ENCODE measurements at regions of chr6 and their contacts with region 1.

Region 1: GRCh38 chr6:8219352-8219943 is 117.1 kb upstream of the EEF1E1 start:
- DNase-seq: peak; percentile 20
- H3K4me3 ChIP-seq: no peak overlapping the region
- H3K27ac ChIP-seq: no peak overlapping the region
- H3K4me1 ChIP-seq: no peaks in the 10 kb centered on the region
- H3K27me3 ChIP-seq: no peaks in the 10 kb centered on the region
- CTCF ChIP-seq: peak; percentile 70 to 77

Region 2: DNA sequence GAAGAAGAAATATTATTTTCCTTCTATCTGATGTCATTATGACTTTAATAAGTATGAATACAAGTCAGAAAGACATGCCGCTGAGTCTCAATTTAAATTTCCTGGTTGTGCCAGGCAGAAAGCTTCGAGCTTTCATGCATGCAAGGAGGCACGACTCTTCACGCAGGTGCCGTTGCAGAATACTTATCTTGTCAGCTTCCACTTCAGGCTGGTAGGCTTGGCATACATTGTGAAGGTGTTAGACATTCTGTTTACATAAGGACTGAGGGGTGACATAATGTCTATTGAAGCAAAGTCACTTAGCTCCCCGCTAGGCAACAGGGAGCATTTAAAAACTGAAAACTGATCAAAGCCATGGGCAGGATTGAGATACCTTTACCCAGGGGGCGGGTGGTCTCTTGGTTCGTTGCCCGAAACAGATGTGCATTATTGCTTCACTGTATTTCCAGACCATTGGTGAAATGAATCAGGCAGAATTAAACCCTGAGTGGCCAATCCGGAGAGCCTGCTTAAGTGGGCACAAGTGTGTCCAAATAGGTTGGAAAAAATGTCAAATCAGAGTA is 477.1 kb before region 1 on chr6:
- CTCF ChIA-PET with region 1: no interaction called
- dilution Hi-C with region 1: no loop called
- in situ Hi-C with region 1: no loop called
- intact Hi-C with region 1: no loop called
- DNase-seq: no peak
- H3K4me3 ChIP-seq: no peak overlapping the region
- H3K27ac ChIP-seq: no peak overlapping the region
- H3K4me1 ChIP-seq: no peaks in the 10 kb centered on the region
- H3K27me3 ChIP-seq: no peaks in the 10 kb centered on the region
- CTCF ChIP-seq: no peak

Region 3: GRCh38 chr6:8131256-8131897 is 88.1 kb before region 1 on chr6:
- CTCF ChIA-PET with region 1: interaction called, 14 read pairs
- dilution Hi-C with region 1: no loop called
- in situ Hi-C with region 1: loop called (anchors 5 kb)
- intact Hi-C with region 1: loop called (anchors 1 kb)
- DNase-seq: peak; percentile 53
- H3K4me3 ChIP-seq: no peak overlapping the region
- H3K27ac ChIP-seq: no peak overlapping the region
- H3K4me1 ChIP-seq: no peaks in the 10 kb centered on the region
- H3K27me3 ChIP-seq: no peaks in the 10 kb centered on the region
- CTCF ChIP-seq: peak; percentile 44 to 72

Region 4: DNA sequence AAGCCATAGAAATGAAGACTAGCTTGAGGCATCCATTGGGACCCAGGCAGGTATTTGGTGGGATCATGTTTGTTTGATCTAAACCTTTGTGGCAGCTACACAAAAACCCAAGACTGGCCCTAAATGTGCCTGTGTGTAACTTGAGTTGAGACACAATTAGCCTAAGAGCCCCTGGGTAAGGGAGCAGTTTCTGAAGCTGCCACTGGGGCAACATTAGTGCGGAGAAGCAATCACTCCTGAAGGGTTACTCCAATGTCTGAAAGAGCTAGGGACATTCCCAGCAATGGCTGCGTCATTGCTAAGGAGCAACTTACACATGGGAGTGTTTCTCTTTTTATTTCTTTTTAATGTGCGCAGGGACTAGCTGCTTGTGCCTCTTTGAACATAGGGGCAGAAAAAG is 49.2 kb before region 1 on chr6:
- CTCF ChIA-PET with region 1: no interaction called
- dilution Hi-C with region 1: no loop called
- in situ Hi-C with region 1: no loop called
- intact Hi-C with region 1: loop called (anchors 5 kb)
- DNase-seq: no peak
- H3K4me3 ChIP-seq: no peak overlapping the region
- H3K27ac ChIP-seq: no peak overlapping the region
- H3K4me1 ChIP-seq: peaks cover 12% of the 10 kb centered on the region
- H3K27me3 ChIP-seq: peaks cover 8% of the 10 kb centered on the region
- CTCF ChIP-seq: no peak

Region 5: DNA sequence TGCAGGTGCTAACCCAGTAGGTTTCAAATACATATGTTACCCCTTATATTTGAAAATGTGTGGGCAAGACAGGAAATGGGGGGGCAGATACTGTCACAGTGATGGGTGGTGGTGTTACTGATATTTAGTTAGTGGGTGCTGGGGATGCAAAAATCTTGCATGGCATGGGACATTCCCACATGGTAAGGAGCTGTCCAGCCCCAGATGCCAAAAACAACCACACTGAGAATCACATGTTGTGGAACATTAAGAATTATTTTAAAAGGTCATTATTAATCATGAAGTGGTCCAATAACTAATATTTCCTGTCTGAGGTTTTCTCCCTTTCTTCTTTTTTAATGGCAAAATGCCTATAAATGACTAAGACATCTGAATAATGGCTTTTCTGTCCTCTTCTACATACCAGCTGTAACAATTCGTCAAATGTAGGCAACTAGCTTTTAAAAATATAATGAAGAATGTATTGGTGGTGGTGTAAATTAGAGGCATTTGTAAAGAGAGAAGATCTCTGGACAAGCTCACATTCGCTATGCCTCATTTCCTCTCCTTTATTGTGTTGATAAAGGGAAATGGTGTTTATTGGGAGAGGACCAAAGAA is 273.2 kb after region 1 on chr6:
- CTCF ChIA-PET with region 1: no interaction called
- dilution Hi-C with region 1: no loop called
- in situ Hi-C with region 1: no loop called
- intact Hi-C with region 1: no loop called
- DNase-seq: peak; percentile 22
- H3K4me3 ChIP-seq: no peak overlapping the region
- H3K27ac ChIP-seq: no peak overlapping the region
- H3K4me1 ChIP-seq: peaks cover 7% of the 10 kb centered on the region
- H3K27me3 ChIP-seq: no peaks in the 10 kb centered on the region
- CTCF ChIP-seq: no peak

Region 6: DNA sequence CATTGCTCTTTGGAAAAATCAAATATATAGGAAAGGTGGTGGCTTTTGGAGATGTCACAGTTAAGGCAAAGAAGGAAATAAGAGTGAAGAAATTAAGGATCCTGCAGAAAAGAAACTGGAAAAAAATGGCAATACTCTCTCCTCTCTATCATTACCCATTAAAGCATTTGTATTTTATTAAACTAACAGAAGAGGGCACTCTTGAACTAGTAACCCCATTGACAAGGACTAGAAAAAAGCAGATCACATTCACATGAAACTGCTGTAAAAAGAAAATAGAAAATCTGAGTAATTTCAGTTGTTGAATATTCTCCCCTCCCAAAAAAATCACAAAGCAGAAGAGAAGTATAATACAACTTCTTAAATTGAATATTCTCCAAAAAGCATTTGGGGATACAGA is 320.0 kb after region 1 on chr6:
- CTCF ChIA-PET with region 1: no interaction called
- dilution Hi-C with region 1: no loop called
- in situ Hi-C with region 1: no loop called
- intact Hi-C with region 1: no loop called
- DNase-seq: peak; percentile 33
- H3K4me3 ChIP-seq: no peak overlapping the region
- H3K27ac ChIP-seq: no peak overlapping the region
- H3K4me1 ChIP-seq: no peaks in the 10 kb centered on the region
- H3K27me3 ChIP-seq: no peaks in the 10 kb centered on the region
- CTCF ChIP-seq: peak; percentile 24 to 51